ENCODE measurements at regions of chr12 and their contacts with region 1.

Region 1: DNA sequence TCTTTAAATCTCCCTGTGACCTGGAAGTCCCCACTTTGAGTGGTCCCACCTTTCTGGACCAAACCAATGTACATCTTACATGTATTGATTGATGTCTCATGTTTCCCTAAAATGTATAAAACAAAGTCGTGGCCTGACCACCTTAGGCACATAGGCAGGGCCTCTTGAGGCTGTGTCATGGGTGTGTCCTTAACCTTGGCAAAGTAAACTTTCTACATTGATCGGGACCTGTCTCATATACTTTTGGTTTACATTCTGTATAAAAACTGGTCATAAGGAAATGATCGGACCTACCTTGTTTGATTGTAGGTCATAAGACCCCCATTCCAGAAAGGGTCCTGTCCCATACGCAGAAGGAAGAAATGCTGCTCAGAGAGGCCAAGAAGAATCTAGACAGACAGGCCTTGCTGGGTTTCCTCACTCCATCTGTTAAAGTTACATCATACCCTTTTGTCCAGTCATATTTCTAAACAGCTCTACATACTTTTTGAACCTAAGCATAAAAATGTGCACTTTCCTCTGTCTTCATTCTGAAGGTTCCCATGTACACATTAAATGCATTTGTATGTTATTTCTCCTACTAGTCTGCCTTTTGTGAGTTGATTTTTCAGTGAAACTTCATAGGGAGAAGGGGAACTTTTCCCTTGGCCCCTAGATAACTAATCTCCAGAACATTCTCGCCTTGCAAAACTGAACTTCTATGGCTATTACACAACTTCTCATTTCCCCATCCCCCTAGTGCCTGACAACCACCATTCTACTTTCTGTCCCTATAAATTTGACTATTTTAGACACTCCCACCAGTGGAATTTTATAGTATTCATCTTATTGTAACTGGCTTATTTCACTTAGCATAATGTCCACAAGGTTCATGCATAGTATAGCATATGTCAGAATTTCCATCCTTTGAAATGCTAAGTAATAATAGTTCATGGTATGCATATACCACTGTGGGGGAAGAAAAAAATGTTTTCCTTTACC is 30.2 kb upstream of the CPM start:
- DNase-seq: no peak

Region 2: DNA sequence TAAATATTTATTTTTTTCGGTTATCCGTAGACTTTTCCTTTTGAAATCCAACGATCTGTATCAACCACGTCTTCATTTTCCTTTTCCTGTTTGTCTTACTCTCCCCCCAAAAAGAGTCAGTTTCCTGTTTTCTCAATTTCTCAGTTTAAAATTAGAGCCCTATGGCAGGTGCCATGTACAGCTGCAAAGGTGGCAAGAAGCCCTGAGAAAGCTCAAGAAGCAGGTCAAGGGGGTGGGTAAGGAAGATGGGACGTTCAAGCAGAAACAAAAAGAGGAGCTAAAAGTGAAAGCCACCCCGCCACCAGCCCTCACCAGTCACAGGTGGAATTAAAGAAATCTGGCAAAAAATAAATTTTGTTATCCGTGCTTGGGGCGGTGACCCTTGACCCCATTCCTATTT is 190.5 kb before region 1 on chr12:
- in situ Hi-C with region 1: no loop called
- DNase-seq: no peak

Region 3: GRCh38 chr12:68821357-68822188 is 141.6 kb before region 1 on chr12:
- in situ Hi-C with region 1: no loop called
- DNase-seq: no peak

Region 4: GRCh38 chr12:68899251-68899771 is 63.9 kb before region 1 on chr12:
- in situ Hi-C with region 1: no loop called
- DNase-seq: no peak

Region 5: GRCh38 chr12:69039894-69040293 is 76.7 kb after region 1 on chr12:
- in situ Hi-C with region 1: loop called (anchors 10 kb)
- DNase-seq: no peak